HCT116 (cell line): ENCODE measurements at regions of chr21 and their contacts with region 1.

Region 1: GRCh38 chr21:31354604-31355443 is 10.8 kb upstream of the TIAM1 start:
- DNase-seq: peak; percentile 98
- ATAC-seq: peak; percentile 84
- H3K4me3 ChIP-seq: peak overlapping the region in 1 of 2 experiments; percentile 33; a peak in 2 of 4 replicates
- H3K27ac ChIP-seq: peak overlapping the region; percentile 100
- H3K4me1 ChIP-seq: peaks cover 75 to 82% of the 10 kb centered on the region in 2 experiments
- H3K27me3 ChIP-seq: no peaks in the 10 kb centered on the region
- CTCF ChIP-seq: no peak
- POLR2A ChIP-seq: no peak
- RAD21 ChIP-seq: no peak

Region 2: GRCh38 chr21:31282095-31282709 is 72.6 kb before region 1 on chr21:
- CTCF ChIA-PET with region 1: no interaction called
- POLR2A ChIA-PET with region 1: interaction called, 3 read pairs
- RAD21 ChIA-PET with region 1: no interaction called
- intact Hi-C with region 1: loop called (anchors 5 kb)
- DNase-seq: peak; percentile 55
- ATAC-seq: peak; percentile 66
- H3K4me3 ChIP-seq: peak overlapping the region; percentile 6 to 35
- H3K27ac ChIP-seq: peak overlapping the region; percentile 74
- H3K4me1 ChIP-seq: peaks cover 44 to 45% of the 10 kb centered on the region in 2 experiments
- H3K27me3 ChIP-seq: no peaks in the 10 kb centered on the region
- CTCF ChIP-seq: no peak
- POLR2A ChIP-seq: no peak
- RAD21 ChIP-seq: peak; percentile 25; the same call in 1 of the 2 replicates

Region 3: DNA sequence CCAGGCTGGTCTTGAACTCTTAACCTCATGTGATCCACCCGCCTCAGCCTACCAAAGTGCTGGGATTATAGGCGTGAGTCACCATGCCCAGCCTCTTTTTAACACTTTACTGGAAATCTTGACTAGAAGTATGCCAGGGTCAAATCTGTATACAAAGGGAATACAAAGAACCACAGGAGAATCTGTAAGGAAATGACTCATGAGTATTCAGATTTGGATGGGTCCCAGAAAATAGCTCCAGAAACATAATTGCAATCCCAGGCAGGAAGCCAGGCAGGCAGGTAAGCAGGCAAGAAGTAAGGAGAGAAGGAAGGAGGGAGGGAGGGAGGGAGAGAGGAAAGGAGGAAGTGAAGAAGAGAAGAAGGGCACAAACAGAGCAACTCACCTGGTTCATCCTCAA is 12.0 kb after region 1 on chr21:
- CTCF ChIA-PET with region 1: interaction called, 4 read pairs
- POLR2A ChIA-PET with region 1: interaction called, 20 read pairs
- RAD21 ChIA-PET with region 1: interaction called in 1 of 2 experiments, 11 read pairs
- intact Hi-C with region 1: loop called (anchors 1 kb)
- DNase-seq: peak; percentile 98
- ATAC-seq: peak; percentile 93
- H3K4me3 ChIP-seq: peak overlapping the region; percentile 22 to 24; a peak in 2 of 4 replicates
- H3K27ac ChIP-seq: peak overlapping the region; percentile 81
- H3K4me1 ChIP-seq: peaks cover 68 to 90% of the 10 kb centered on the region in 2 experiments
- H3K27me3 ChIP-seq: no peaks in the 10 kb centered on the region
- CTCF ChIP-seq: no peak
- POLR2A ChIP-seq: no peak
- RAD21 ChIP-seq: no peak

Region 4: DNA sequence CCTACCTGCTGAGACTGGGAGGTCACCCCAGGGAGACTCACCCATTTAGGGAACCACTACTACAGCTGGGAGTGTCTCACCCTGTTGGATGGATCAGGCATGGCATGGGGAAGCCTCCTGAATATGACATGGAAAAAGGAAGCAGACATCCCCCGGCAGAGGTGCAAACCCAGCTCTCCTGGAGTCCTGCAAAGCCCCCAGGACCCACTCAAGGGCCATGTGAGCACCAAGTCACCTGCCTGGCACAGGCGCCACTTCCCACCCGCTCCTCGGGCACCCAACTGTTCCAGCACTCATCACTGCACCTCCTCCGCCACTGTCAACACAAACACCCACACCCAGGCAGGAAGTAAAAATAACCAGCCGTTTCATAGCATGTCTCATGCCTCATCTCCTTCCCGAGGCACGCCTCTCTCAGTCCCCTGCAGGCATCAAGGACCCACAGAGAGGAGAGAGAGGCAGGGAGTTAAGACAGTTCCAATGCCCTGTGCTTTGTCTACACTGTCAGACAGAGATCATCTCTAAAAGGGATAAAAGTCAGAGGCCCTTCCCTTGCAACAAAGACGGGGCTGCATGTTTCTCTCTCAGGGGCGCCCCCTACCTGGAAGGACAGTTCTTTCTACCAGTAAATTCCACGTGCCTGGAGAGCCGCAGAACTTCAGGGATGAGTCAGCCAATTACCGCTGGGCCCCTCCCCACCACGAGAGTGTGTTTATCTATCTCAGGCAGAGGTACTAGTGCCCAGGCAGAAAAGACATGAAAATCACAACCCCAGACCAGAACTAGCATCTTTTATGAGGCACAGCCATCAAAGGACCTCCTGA is 154.6 kb after region 1 on chr21:
- CTCF ChIA-PET with region 1: no interaction called
- POLR2A ChIA-PET with region 1: no interaction called
- RAD21 ChIA-PET with region 1: no interaction called
- intact Hi-C with region 1: loop called (anchors 2 kb)
- DNase-seq: peak; percentile 67
- ATAC-seq: peak; percentile 85
- H3K4me3 ChIP-seq: peak overlapping the region in 1 of 2 experiments; percentile 41; a peak in 2 of 4 replicates
- H3K27ac ChIP-seq: peak overlapping the region; percentile 69
- H3K4me1 ChIP-seq: peaks cover 43 to 59% of the 10 kb centered on the region in 2 experiments
- H3K27me3 ChIP-seq: no peaks in the 10 kb centered on the region
- CTCF ChIP-seq: peak; percentile 60 to 78 (median 77); a peak in 5 of 6 replicates
- POLR2A ChIP-seq: no peak
- RAD21 ChIP-seq: peak; percentile 59

Region 5: GRCh38 chr21:31558962-31559367 is 204.1 kb after region 1 on chr21:
- CTCF ChIA-PET with region 1: no interaction called
- POLR2A ChIA-PET with region 1: interaction called, 3 read pairs
- RAD21 ChIA-PET with region 1: no interaction called
- intact Hi-C with region 1: loop called (anchors 2 kb)
- DNase-seq: peak; percentile 80
- ATAC-seq: peak; percentile 86
- H3K4me3 ChIP-seq: peak overlapping the region; percentile 63 to 65
- H3K27ac ChIP-seq: peak overlapping the region; percentile 66
- H3K4me1 ChIP-seq: peaks cover 30 to 51% of the 10 kb centered on the region in 2 experiments
- H3K27me3 ChIP-seq: no peaks in the 10 kb centered on the region
- CTCF ChIP-seq: peak in 1 of 3 experiments; percentile 18; a peak in 1 of 6 replicates
- POLR2A ChIP-seq: no peak
- RAD21 ChIP-seq: no peak

Region 6: DNA sequence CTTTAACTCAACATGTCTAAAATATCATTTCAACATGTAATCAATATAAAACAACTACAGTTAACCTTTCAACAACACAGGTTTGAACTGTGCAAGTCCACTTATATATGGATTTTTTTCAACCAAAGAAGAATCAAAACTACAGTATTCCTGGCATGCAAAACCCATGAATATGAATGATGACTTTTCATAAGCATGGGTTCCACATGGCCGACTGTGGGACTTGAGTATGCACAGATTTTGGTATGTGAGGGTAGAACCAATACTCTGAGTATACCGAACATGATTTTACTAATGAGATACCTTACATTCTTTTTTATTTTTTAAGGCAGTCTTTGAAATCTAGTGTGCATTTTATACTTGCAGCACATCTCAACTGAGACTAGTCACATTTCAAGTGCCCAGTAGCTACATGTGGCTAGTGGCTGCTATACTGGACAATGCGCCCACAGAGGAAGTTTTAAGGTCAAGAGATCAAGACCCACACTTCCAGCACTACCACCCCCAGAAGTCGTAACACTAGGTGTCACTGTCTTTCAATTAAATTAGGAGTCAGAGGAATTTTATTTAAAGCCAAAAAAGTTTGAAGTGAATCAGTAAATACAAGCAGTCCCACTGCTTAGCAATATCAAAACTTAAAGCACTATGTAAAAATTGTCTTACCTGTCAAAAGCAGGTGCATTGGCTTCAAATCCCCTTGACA is 1333.0 kb after region 1 on chr21:
- CTCF ChIA-PET with region 1: no interaction called
- POLR2A ChIA-PET with region 1: no interaction called
- RAD21 ChIA-PET with region 1: no interaction called
- intact Hi-C with region 1: no loop called
- DNase-seq: no peak
- ATAC-seq: no peak
- H3K4me3 ChIP-seq: no peak overlapping the region
- H3K27ac ChIP-seq: no peak overlapping the region
- H3K4me1 ChIP-seq: no peaks in the 10 kb centered on the region
- H3K27me3 ChIP-seq: no peaks in the 10 kb centered on the region
- CTCF ChIP-seq: no peak
- POLR2A ChIP-seq: no peak
- RAD21 ChIP-seq: peak; percentile 11; the same call in 1 of the 2 replicates